Pancreas (tissue), 10 donors: ENCODE measurements at regions of chr7 and their contacts with region 1.

Region 1: DNA sequence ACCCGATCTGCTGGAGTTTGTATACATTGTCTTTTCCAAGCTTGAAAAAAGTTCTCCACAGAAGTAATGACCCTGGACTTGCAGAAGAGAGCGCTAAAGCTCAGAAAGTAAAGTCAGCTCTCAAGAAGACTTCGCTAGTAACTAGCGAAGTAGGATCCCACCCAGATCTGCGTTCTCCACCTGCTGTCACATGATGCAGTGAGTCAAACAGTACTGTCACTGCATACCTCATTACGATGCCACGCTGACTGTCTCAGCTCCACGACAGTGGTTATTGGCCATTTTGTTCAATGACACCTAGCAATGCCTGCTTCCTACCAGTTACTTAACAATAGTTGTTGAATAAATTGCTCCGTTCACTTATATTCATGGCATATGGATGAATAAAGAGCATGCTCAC is 29.7 kb upstream of the SEC61G start:
- DNase-seq: peak in 2 of 6 donors; percentile 18 to 38
- ATAC-seq: peak; percentile 71 to 94 (median 92)
- H3K4me3 ChIP-seq: no peak overlapping the region
- H3K27ac ChIP-seq: no peak overlapping the region
- H3K4me1 ChIP-seq: no peaks in the 10 kb centered on the region
- H3K27me3 ChIP-seq: no peaks in the 10 kb centered on the region
- CTCF ChIP-seq: peak in 3 of 4 donors; percentile 29 to 51 (median 42)

Region 2: GRCh38 chr7:54839538-54840213 is 51.0 kb after region 1 on chr7:
- intact Hi-C with region 1: loop called in 1 of 3 experiments (anchors 10 kb)
- DNase-seq: peak; percentile 20 to 85 (median 58)
- ATAC-seq: peak; percentile 75 to 93 (median 89)
- H3K4me3 ChIP-seq: no peak overlapping the region
- H3K27ac ChIP-seq: no peak overlapping the region
- H3K4me1 ChIP-seq: peaks cover 5 to 8% (median 7%) of the 10 kb centered on the region in 3 donors
- H3K27me3 ChIP-seq: no peaks in the 10 kb centered on the region
- CTCF ChIP-seq: peak in 3 of 4 donors; percentile 20 to 55 (median 35)